Astrocyte of the cerebellum (primary cell): ENCODE measurements at regions of chr1 and their contacts with region 1.

Region 1: DNA sequence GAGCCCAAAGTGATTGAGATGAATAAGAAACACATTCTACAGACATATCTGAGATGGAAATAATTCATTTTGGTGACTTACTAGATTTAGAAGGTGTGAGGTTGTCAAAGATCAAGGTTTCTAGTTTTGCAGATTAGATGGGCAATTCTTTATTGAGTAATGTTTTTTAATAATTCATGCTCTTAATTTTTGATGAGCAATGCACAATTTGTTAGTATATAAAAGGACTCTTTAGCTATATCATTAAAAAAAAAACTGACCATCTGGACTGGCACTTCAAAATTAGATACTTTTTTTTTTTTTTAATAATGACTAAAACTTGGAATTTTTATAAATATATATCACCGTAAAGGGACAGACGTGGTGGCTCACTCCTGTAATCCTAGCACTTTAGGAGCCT is 63.9 kb downstream of the FMN2 start:
- DNase-seq: no peak
- H3K4me3 ChIP-seq: no peak overlapping the region
- CTCF ChIP-seq: no peak

Region 2: DNA sequence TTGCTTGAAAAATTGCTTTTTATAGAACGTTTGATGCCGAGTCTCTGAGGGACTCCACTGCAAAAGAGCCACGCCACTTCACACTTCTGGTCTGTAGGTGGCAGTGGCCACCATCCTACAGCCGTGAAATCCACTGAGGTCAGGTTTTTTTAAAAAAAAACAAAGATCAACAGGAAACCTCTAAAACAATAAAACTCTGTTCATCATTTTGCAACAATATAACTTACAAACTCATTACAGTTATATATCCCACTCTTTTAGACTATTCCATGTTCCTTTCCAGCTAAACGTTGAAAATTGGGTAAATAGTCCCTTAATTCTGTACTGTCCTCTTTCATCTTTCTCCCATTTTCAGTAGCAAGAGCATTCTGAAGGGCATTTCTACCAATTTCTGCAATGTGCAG is 128.5 kb before region 1 on chr1:
- in situ Hi-C with region 1: loop called (anchors 5 kb)
- DNase-seq: peak; percentile 29
- H3K4me3 ChIP-seq: no peak overlapping the region
- CTCF ChIP-seq: peak; percentile 98